GM12878 (cell line): ENCODE measurements at regions of chr12 and their contacts with region 1.

Region 1: DNA sequence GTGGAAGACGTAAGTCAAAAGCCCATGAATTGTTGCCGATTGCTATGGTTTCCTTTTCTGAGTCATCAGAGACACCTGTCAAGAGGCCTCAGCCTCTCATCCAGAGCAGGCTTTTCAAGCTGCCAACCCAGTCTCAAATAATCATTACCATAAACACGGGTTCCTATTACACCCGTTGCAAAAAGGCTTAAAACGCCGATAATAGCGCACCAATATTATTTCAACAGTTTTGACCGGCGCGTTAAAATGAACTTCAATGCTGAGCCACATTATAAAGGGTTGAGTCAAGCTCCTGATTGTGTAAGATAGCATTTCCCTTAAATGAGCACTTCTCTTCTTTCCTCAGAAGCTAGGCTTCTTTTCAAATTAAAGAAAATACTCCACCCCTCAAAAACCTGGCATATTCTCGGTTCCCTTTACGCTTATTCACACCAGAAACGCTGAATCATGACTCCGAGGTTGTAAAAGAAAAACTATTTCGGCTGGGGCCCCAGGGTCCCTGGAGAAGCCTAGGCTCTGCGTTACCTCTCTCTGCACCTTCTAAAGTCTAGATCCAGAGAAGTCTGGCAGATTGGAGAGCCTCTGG is 1.4 kb downstream of the TMTC1 start:
- DNase-seq: no peak
- ATAC-seq: peak; percentile 80
- H3K4me3 ChIP-seq: peak overlapping the region; percentile 50
- H3K27ac ChIP-seq: no peak overlapping the region
- H3K4me1 ChIP-seq: no peaks in the 10 kb centered on the region
- H3K27me3 ChIP-seq: no peaks in the 10 kb centered on the region
- CTCF ChIP-seq: no peak
- EP300 ChIP-seq: peak in 1 of 2 experiments; percentile 29; a peak in 1 of 4 replicates
- POLR2A ChIP-seq: no peak
- RAD21 ChIP-seq: no peak

Region 2: DNA sequence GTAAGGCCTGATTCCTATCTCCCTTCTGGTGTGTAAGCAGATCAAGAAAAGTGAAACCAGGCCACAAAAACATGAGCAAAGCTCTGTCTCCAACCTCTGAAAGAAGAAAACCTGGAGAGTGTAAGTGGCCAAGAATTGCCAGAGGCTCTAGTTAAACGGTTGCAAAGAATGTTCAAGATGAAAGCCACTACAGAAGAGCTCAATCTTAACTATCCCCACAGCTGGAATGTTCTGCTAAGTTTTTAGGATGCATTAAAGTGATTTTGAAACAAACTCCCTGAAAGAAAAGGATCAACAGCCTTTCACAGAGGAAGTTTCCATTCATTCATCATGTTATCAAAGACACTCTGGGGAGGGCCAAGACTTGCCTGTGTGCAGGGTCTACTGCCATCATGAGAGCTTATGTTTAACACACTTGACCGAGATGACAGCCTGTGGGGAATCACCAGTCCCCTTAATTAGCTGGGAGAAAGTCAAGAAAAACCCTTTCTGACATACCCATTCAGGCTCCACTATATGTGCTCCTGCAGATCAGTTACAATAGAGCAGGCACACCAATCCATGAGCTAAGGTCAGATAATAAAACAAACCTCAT is 156.9 kb before region 1 on chr12:
- CTCF ChIA-PET with region 1: interaction called, 3 read pairs
- POLR2A ChIA-PET with region 1: interaction called, 3 read pairs
- RAD21 ChIA-PET with region 1: interaction called, 5 read pairs
- SMC1A ChIA-PET with region 1: interaction called, 21 read pairs
- in situ Hi-C with region 1: no loop called
- intact Hi-C with region 1: no loop called
- DNase-seq: peak; percentile 16
- ATAC-seq: peak; percentile 83
- H3K4me3 ChIP-seq: no peak overlapping the region
- H3K27ac ChIP-seq: no peak overlapping the region
- H3K4me1 ChIP-seq: no peaks in the 10 kb centered on the region
- H3K27me3 ChIP-seq: no peaks in the 10 kb centered on the region
- CTCF ChIP-seq: no peak
- EP300 ChIP-seq: no peak
- POLR2A ChIP-seq: no peak
- RAD21 ChIP-seq: no peak

Region 3: DNA sequence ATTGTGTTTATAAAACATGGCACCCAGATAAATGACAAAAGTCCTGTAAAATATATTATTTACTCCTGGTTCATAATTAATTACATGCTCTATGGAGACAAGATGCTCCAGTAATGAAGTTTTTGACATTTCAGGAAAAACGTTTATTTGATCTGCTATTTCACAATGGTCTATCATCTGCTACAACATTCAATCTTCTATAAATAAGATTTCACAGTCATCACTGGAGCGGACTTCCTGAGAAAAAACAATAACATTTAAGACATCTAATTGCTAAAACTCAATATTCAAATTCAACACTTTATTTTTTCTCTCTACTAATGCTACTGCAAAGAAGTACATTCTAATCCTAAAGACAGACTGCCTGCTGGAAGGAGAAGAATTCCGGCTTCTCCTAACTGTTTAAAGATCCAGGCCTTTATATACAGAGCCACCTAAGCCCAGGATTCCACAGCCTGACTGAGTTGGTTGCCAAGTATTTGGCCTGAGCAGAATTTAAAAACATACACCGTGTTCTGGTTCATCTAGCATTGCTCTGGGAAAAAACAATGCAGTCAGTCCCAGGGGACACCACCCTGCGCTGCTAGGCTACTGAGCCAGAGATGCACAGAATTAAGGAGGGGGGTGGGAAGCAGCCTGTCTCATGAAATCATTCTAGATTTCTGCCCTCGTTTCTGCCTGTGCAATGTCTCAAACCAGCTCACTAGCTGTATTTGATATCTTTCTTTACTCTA is 56.6 kb before region 1 on chr12:
- CTCF ChIA-PET with region 1: interaction called, 5 read pairs
- POLR2A ChIA-PET with region 1: interaction called, 3 read pairs
- RAD21 ChIA-PET with region 1: interaction called, 10 read pairs
- SMC1A ChIA-PET with region 1: interaction called, 12 read pairs
- in situ Hi-C with region 1: no loop called
- intact Hi-C with region 1: no loop called
- DNase-seq: peak; percentile 54
- ATAC-seq: peak; percentile 91
- H3K4me3 ChIP-seq: no peak overlapping the region
- H3K27ac ChIP-seq: no peak overlapping the region
- H3K4me1 ChIP-seq: no peaks in the 10 kb centered on the region
- H3K27me3 ChIP-seq: no peaks in the 10 kb centered on the region
- CTCF ChIP-seq: no peak
- EP300 ChIP-seq: 0 out of 4 replicates have a peak, but pooled peaks of 1 of the 2 experiments have one; percentile 12
- POLR2A ChIP-seq: no peak
- RAD21 ChIP-seq: no peak

Region 4: GRCh38 chr12:29738365-29738764 is 44.0 kb before region 1 on chr12:
- CTCF ChIA-PET with region 1: interaction called, 5 read pairs
- POLR2A ChIA-PET with region 1: interaction called, 3 read pairs
- RAD21 ChIA-PET with region 1: interaction called, 8 read pairs
- SMC1A ChIA-PET with region 1: interaction called, 21 read pairs
- in situ Hi-C with region 1: no loop called
- intact Hi-C with region 1: no loop called
- DNase-seq: no peak
- ATAC-seq: no peak
- H3K4me3 ChIP-seq: no peak overlapping the region
- H3K27ac ChIP-seq: no peak overlapping the region
- H3K4me1 ChIP-seq: no peaks in the 10 kb centered on the region
- H3K27me3 ChIP-seq: no peaks in the 10 kb centered on the region
- CTCF ChIP-seq: no peak
- EP300 ChIP-seq: no peak
- POLR2A ChIP-seq: no peak
- RAD21 ChIP-seq: no peak

Region 5: DNA sequence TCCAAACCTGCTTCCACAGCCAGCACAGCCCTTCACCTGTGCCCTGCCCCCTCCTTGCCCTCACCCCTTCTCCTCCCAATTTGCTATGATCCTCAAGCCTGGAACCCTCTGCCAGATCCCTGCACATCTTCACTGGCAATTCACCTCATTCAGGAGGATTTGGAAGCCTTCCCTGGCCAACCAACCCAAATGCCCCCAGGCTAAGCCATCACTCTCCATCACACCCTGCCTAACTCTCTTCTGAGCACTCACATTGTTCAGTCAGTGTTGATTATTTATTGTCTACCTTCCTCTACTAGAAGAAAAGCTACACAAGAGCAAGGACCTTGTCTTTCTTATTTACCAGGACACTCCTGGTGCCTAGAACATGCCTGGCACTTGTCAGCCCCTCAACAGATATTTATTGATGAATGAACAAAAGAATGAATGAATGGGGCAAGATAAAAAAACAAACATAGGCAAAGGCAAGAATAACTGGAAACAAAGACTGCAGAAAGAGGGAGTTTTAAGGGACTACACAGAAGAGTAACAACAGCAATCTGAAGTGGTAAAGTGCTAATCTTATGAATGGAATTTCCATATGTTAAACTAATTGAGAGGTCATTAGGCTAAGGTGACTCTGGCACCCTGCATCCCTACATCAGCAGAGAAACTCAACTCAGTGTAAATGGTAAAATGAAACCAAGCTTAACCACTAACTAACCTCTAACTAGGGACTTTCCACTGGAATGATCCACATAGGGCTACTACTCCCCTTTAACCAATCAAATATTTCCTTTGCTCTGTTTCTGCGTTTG is 32.0 kb before region 1 on chr12:
- CTCF ChIA-PET with region 1: interaction called, 4 read pairs
- POLR2A ChIA-PET with region 1: interaction called, 8 read pairs
- RAD21 ChIA-PET with region 1: interaction called, 28 read pairs
- SMC1A ChIA-PET with region 1: interaction called, 12 read pairs
- in situ Hi-C with region 1: no loop called
- intact Hi-C with region 1: loop called (anchors 2 kb)
- DNase-seq: peak; percentile 75
- ATAC-seq: peak; percentile 95
- H3K4me3 ChIP-seq: no peak overlapping the region
- H3K27ac ChIP-seq: no peak overlapping the region
- H3K4me1 ChIP-seq: peaks cover 9% of the 10 kb centered on the region
- H3K27me3 ChIP-seq: no peaks in the 10 kb centered on the region
- CTCF ChIP-seq: no peak
- EP300 ChIP-seq: peak in 1 of 2 experiments; percentile 41; a peak in 1 of 4 replicates
- POLR2A ChIP-seq: no peak
- RAD21 ChIP-seq: no peak

Region 6: DNA sequence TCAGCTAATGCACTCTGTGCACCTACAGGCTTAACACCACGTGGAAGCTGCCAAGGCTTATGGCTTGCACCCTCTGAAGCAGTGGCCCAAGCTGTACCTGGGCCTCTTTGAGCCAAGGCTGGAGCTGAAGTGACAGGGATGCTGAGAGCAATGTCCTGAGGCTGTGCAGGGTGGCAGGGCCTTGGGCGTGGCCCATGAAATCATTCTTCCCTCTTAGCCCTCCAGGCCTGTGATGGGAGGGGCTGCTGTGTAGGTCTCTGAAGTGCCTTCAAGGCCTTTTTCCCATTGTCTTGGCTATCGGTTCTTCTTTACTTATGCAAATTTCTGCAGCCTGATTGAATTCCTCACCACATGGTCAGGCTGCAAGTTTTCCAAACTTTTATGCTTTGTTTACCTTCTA is 48.8 kb after region 1 on chr12:
- CTCF ChIA-PET with region 1: no interaction called
- POLR2A ChIA-PET with region 1: no interaction called
- RAD21 ChIA-PET with region 1: no interaction called
- SMC1A ChIA-PET with region 1: no interaction called
- in situ Hi-C with region 1: no loop called
- intact Hi-C with region 1: no loop called
- DNase-seq: no peak
- ATAC-seq: no peak
- H3K4me3 ChIP-seq: no peak overlapping the region
- H3K27ac ChIP-seq: no peak overlapping the region
- H3K4me1 ChIP-seq: no peaks in the 10 kb centered on the region
- H3K27me3 ChIP-seq: no peaks in the 10 kb centered on the region
- CTCF ChIP-seq: no peak
- EP300 ChIP-seq: no peak
- POLR2A ChIP-seq: no peak
- RAD21 ChIP-seq: no peak

Region 7: DNA sequence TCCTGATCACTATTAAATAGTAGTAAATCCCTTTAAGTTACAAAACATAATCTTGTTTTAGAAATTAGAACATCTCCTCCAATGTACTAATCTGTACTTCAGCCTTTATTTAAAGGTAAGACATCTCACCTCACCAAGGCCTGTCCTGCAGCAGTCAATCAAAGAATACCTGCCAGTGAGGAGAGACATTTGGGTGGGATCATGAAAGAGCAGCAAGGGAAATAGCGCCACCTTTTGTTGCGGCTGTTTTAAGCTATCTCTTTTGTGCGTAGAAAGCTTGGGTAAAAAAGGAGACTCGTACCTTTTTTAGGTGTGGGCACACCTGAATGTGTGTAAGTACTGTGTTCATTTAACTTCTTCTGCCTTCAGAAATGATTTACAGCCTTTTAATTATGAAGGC is 119.2 kb after region 1 on chr12:
- CTCF ChIA-PET with region 1: interaction called, 4 read pairs
- POLR2A ChIA-PET with region 1: no interaction called
- RAD21 ChIA-PET with region 1: interaction called, 3 read pairs
- SMC1A ChIA-PET with region 1: interaction called, 12 read pairs
- in situ Hi-C with region 1: no loop called
- intact Hi-C with region 1: no loop called
- DNase-seq: no peak
- ATAC-seq: no peak; the same call in 2 of the 3 replicates
- H3K4me3 ChIP-seq: no peak overlapping the region
- H3K27ac ChIP-seq: no peak overlapping the region
- H3K4me1 ChIP-seq: no peaks in the 10 kb centered on the region
- H3K27me3 ChIP-seq: no peaks in the 10 kb centered on the region
- CTCF ChIP-seq: peak in 1 of 3 experiments; percentile 38; a peak in 1 of 6 replicates
- EP300 ChIP-seq: no peak
- POLR2A ChIP-seq: no peak
- RAD21 ChIP-seq: no peak

Region 8: GRCh38 chr12:30063435-30063945 is 281.1 kb after region 1 on chr12:
- CTCF ChIA-PET with region 1: no interaction called
- POLR2A ChIA-PET with region 1: no interaction called
- RAD21 ChIA-PET with region 1: no interaction called
- SMC1A ChIA-PET with region 1: no interaction called
- in situ Hi-C with region 1: no loop called
- intact Hi-C with region 1: no loop called
- DNase-seq: no peak
- ATAC-seq: no peak
- H3K4me3 ChIP-seq: no peak overlapping the region
- H3K27ac ChIP-seq: no peak overlapping the region
- H3K4me1 ChIP-seq: no peaks in the 10 kb centered on the region
- H3K27me3 ChIP-seq: no peaks in the 10 kb centered on the region
- CTCF ChIP-seq: no peak
- EP300 ChIP-seq: no peak
- POLR2A ChIP-seq: no peak
- RAD21 ChIP-seq: no peak